CD14-positive monocyte (primary cell): ENCODE measurements at regions of chr17 and their contacts with region 1.

Region 1: GRCh38 chr17:34998205-34998604 is 17.9 kb downstream of the LIG3 start:
- DNase-seq: peak; percentile 66 to 74 (median 69)
- H3K4me3 ChIP-seq: no peak overlapping the region
- H3K4me3 Mint-ChIP-seq: no peak overlapping the region
- H3K27ac ChIP-seq: no peak overlapping the region
- H3K27ac Mint-ChIP-seq: peak overlapping the region in 4 of 7 donors; percentile 50 to 61 (median 57)
- H3K4me1 ChIP-seq: peaks cover 25 to 29% of the 10 kb centered on the region in 2 donors
- H3K4me1 Mint-ChIP-seq: peaks cover 35% of the 10 kb centered on the region
- H3K27me3 ChIP-seq: no peaks in the 10 kb centered on the region
- H3K27me3 Mint-ChIP-seq: no peaks in the 10 kb centered on the region
- CTCF ChIP-seq: peak; percentile 89

Region 2: GRCh38 chr17:35104844-35105450 is 106.7 kb after region 1 on chr17:
- intact Hi-C with region 1: loop called in 1 of 2 experiments (anchors 5 kb)
- DNase-seq: no peak
- H3K4me3 ChIP-seq: no peak overlapping the region
- H3K4me3 Mint-ChIP-seq: no peak overlapping the region
- H3K27ac ChIP-seq: no peak overlapping the region
- H3K27ac Mint-ChIP-seq: no peak overlapping the region
- H3K4me1 ChIP-seq: peaks cover 14 to 19% of the 10 kb centered on the region in 2 donors
- H3K4me1 Mint-ChIP-seq: peaks cover 26% of the 10 kb centered on the region
- H3K27me3 ChIP-seq: no peaks in the 10 kb centered on the region
- H3K27me3 Mint-ChIP-seq: peaks cover 0 to 2% (median 1%) of the 10 kb centered on the region in 3 donors
- CTCF ChIP-seq: no peak

Region 3: DNA sequence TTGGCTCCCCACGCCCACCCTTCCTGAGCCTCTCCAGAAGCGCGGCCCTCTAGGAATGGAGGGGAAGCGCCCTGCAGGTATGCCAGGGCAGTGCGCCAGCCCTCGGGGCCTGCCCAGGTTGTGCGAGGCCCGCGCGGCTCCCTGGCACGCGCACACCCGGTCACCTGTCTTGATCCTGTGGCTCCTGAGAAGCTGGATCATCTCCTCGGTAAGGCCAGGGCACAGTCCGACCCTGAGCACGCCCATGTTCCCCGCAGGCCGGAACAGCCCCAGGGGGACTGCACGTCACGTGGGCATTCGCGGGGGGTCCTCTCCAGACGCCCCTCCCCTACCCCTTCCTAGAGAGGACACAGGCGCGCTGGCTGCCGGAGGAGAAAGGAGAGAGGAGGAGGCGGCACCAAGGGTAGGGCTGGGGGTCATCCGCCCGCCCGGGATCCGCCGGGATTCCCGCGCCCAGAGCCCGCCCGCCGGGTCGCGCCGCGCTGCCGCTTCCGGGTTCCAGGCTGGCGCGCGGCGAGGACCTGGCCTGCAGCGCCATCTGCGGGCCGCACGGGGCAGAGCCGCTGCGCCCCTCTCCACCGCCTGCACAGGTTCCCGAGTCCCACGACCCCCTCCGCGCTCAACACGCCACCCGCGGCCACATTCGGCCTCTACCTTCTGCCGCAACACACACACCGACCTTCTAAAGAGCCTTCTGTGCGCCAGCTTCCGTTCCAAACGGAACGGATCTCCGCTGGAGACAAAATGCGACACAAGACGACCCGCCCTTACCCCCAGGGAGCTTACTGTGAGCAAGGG is 121.4 kb after region 1 on chr17 and contains the start of gene RAD51D:
- intact Hi-C with region 1: loop called (anchors 2 to 5 kb)
- DNase-seq: peak; percentile 62 to 74 (median 72)
- H3K4me3 ChIP-seq: peak within 1 kb of the TSS; percentile 73 to 97 (median 83)
- H3K4me3 Mint-ChIP-seq: peak within 1 kb of the TSS; percentile 90 to 95
- H3K27ac ChIP-seq: peak within 1 kb of the TSS in 1 of 2 donors; percentile 82
- H3K27ac Mint-ChIP-seq: peak within 1 kb of the TSS; percentile 70 to 89 (median 77)
- H3K4me1 ChIP-seq: peaks cover 16 to 21% of the 10 kb centered on the region in 2 donors
- H3K4me1 Mint-ChIP-seq: peaks cover 35% of the 10 kb centered on the region
- H3K27me3 ChIP-seq: no peaks in the 10 kb centered on the region
- H3K27me3 Mint-ChIP-seq: peaks cover 0 to 5% (median 4%) of the 10 kb centered on the region in 3 donors
- CTCF ChIP-seq: peak; percentile 90
- polyA plus RNA-seq, gene RAD51D: 4.4 to 6.9 (median 5.8) TPM